Sigmoid colon (tissue), 7 donors: ENCODE measurements at regions of chr2 and their contacts with region 1.

Region 1: GRCh38 chr2:178414266-178415247 is 36.4 kb downstream of the PRKRA start:
- DNase-seq: peak; percentile 95
- H3K4me3 ChIP-seq: peak overlapping the region; percentile 46 to 63 (median 62)
- H3K27ac ChIP-seq: peak overlapping the region; percentile 90 to 94 (median 91)
- H3K4me1 ChIP-seq: peaks cover 0 to 23% (median 5%) of the 10 kb centered on the region in 4 donors
- H3K27me3 ChIP-seq: no peaks in the 10 kb centered on the region
- CTCF ChIP-seq: peak; percentile 72 to 88 (median 86)
- EP300 ChIP-seq: no peak
- POLR2A ChIP-seq: no peak

Region 2: GRCh38 chr2:177806025-177806424 is 608.5 kb before region 1 on chr2:
- intact Hi-C with region 1: loop called (anchors 10 kb)
- DNase-seq: no peak
- H3K4me3 ChIP-seq: no peak overlapping the region
- H3K27ac ChIP-seq: peak overlapping the region in 1 of 4 donors; percentile 0
- H3K4me1 ChIP-seq: no peaks in the 10 kb centered on the region
- H3K27me3 ChIP-seq: no peaks in the 10 kb centered on the region
- CTCF ChIP-seq: no peak
- EP300 ChIP-seq: no peak
- POLR2A ChIP-seq: no peak

Region 3: GRCh38 chr2:178112202-178113152 is 302.1 kb before region 1 on chr2 and contains the start of gene RBM45:
- intact Hi-C with region 1: loop called (anchors 5 kb)
- DNase-seq: peak; percentile 95
- H3K4me3 ChIP-seq: peak within 1 kb of the TSS; percentile 73 to 89 (median 80)
- H3K27ac ChIP-seq: peak within 1 kb of the TSS; percentile 76 to 82 (median 80)
- H3K4me1 ChIP-seq: peaks cover 0 to 16% (median 13%) of the 10 kb centered on the region in 4 donors
- H3K27me3 ChIP-seq: no peaks in the 10 kb centered on the region
- CTCF ChIP-seq: peak; percentile 83 to 92 (median 88)
- EP300 ChIP-seq: no peak
- POLR2A ChIP-seq: peak in 1 of 2 donors; percentile 35
- total RNA-seq, gene RBM45: 11.0 to 16.3 (median 14.0) TPM

Region 4: DNA sequence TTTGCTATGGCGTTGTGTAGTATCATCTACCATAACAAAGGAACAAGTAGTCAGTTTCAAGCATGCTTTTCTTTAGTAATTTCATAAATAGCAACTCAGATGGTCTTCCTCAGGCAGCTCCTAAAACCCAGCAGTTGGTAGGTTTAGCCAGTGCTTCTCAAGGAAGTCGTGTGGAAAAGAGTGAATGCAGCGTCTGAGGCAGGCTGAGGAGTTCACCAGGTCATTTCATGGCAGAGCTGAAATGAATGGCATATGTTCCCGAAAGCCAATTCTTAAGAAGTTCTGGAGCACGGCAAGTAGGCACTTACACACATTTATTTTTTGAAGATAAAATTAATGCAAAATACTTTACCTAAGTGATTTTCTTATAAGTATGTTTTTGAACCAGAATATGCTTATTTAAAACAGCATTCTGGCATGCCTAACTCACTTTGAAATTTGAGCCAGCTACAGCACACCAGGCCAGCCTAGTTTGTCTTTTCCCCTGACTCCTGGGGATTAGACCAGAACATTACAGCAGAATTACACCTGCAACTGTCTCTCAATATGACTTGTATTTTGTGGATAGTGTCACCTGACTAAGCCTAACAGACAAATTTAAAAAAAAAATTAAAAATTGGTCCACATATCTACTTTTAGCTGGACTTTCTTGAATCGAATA is 158.0 kb before region 1 on chr2:
- intact Hi-C with region 1: no loop called
- DNase-seq: no peak
- H3K4me3 ChIP-seq: no peak overlapping the region
- H3K27ac ChIP-seq: no peak overlapping the region
- H3K4me1 ChIP-seq: no peaks in the 10 kb centered on the region
- H3K27me3 ChIP-seq: no peaks in the 10 kb centered on the region
- CTCF ChIP-seq: no peak
- EP300 ChIP-seq: no peak
- POLR2A ChIP-seq: no peak

Region 5: DNA sequence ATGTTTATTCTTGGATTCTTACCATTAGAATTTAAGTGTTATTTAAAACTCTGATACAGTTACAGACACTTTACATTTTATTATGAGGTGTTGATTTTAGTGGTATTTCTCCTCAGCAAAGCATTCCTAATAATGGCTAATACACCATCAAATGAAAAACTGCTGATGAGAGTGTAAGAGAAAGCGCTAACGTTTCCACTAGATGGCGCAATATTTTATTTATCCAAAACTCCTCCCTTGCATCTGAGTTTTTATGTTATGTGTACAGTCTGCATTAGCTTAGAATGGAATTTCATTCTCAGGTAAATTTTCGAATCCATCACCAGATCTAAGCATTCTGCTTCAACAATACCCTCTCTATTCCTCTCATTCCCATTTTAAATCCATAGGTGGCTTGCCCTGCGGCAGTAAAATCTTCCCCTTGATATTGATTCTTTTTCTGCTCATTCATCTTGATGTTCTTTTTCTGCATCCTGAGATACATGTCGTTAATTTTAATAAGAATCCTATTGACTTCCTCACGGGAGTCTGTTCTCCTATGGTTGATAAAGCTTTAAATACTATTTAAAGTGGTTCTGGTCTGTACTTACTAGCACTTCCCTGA is 17.5 kb before region 1 on chr2:
- intact Hi-C with region 1: loop called (anchors 1 kb)
- DNase-seq: no peak
- H3K4me3 ChIP-seq: no peak overlapping the region
- H3K27ac ChIP-seq: no peak overlapping the region
- H3K4me1 ChIP-seq: no peaks in the 10 kb centered on the region
- H3K27me3 ChIP-seq: no peaks in the 10 kb centered on the region
- CTCF ChIP-seq: peak in 3 of 4 experiments; percentile 45 to 57 (median 50)
- EP300 ChIP-seq: no peak
- POLR2A ChIP-seq: no peak

Region 6: DNA sequence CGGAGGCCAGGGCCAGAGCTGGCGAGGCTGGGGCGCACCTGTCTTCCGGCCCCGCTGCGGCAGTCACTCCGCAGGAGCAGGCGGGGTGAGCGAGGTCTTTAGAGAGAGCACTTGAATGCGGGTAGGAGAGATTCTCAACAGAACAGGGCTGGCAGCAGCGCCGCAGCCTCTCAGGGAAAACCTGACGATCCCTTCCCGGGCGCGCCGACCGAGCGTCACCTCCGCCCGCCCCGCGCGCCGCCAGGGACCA is 35.9 kb after region 1 on chr2:
- intact Hi-C with region 1: no loop called
- DNase-seq: peak; percentile 81
- H3K4me3 ChIP-seq: peak overlapping the region; percentile 88 to 94 (median 93)
- H3K27ac ChIP-seq: peak overlapping the region; percentile 97 to 98 (median 98)
- H3K4me1 ChIP-seq: peaks cover 0 to 39% (median 33%) of the 10 kb centered on the region in 4 donors
- H3K27me3 ChIP-seq: no peaks in the 10 kb centered on the region
- CTCF ChIP-seq: no peak
- EP300 ChIP-seq: no peak
- POLR2A ChIP-seq: no peak

Region 7: DNA sequence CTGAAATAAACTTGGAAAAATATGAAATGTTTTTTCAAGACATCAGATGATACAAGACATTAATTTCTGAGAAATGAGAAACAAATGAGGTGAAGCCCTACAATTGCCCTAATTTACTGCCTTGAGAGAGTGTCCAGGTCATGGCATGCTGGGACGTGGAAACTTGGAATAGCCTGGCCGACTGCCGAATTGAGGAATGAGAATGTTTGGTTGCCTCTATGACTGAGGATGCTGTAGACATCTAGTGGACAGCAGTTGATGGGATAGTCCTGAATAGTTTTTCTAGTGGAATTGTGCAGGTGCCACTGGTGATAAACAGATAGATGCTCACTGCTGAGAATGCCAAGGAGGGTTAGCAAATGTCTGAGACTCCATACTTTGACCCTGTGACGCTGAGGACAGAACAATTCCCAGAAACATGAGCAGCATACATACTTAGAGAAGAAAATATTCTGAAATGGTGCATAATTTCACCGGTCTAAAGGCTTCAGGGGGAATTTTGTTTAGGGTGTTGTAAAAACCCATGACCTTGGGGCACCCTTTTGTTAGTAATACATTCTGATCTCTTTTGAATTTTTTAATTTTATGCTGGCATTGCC is 1649.0 kb after region 1 on chr2:
- intact Hi-C with region 1: no loop called
- DNase-seq: no peak
- H3K4me3 ChIP-seq: no peak overlapping the region
- H3K27ac ChIP-seq: no peak overlapping the region
- H3K4me1 ChIP-seq: no peaks in the 10 kb centered on the region
- H3K27me3 ChIP-seq: no peaks in the 10 kb centered on the region
- CTCF ChIP-seq: no peak
- EP300 ChIP-seq: no peak
- POLR2A ChIP-seq: no peak